ENCODE measurements at regions of chr11 and their contacts with region 1.

Region 1: GRCh38 chr11:69888483-69889076 is 69.4 kb upstream of the FGF3 start:
- DNase-seq: peak; percentile 79 to 88 (median 86)
- ATAC-seq: peak; percentile 90
- H3K4me3 ChIP-seq: no peak overlapping the region
- H3K27ac ChIP-seq: no peak overlapping the region
- H3K4me1 ChIP-seq: peaks cover 0 to 15% of the 10 kb centered on the region in 2 experiments; a peak in 2 of 5 replicates
- H3K27me3 ChIP-seq: peaks cover 15 to 59% of the 10 kb centered on the region in 2 experiments; a peak in 3 of 5 replicates
- CTCF ChIP-seq: peak; percentile 83 to 95 (median 85)
- EP300 ChIP-seq: no peak
- POLR2A ChIP-seq: no peak
- RAD21 ChIP-seq: peak; percentile 48 to 71

Region 2: GRCh38 chr11:69683764-69684333 is 204.7 kb before region 1 on chr11:
- CTCF ChIA-PET with region 1: interaction called, 25 read pairs
- POLR2A ChIA-PET with region 1: no interaction called
- in situ Hi-C with region 1: loop called (anchors 10 kb)
- intact Hi-C with region 1: loop called (anchors 1 kb)
- DNase-seq: peak in 3 of 4 experiments; percentile 38 to 54 (median 44)
- ATAC-seq: peak; percentile 76
- H3K4me3 ChIP-seq: no peak overlapping the region
- H3K27ac ChIP-seq: no peak overlapping the region; the same call in 2 of the 3 replicates
- H3K4me1 ChIP-seq: peaks cover 0 to 13% of the 10 kb centered on the region in 2 experiments; a peak in 3 of 5 replicates
- H3K27me3 ChIP-seq: no peaks in the 10 kb centered on the region
- CTCF ChIP-seq: peak; percentile 56 to 73 (median 61)
- EP300 ChIP-seq: no peak
- POLR2A ChIP-seq: no peak
- RAD21 ChIP-seq: peak; percentile 31 to 79; a peak in 2 of 4 replicates

Region 3: DNA sequence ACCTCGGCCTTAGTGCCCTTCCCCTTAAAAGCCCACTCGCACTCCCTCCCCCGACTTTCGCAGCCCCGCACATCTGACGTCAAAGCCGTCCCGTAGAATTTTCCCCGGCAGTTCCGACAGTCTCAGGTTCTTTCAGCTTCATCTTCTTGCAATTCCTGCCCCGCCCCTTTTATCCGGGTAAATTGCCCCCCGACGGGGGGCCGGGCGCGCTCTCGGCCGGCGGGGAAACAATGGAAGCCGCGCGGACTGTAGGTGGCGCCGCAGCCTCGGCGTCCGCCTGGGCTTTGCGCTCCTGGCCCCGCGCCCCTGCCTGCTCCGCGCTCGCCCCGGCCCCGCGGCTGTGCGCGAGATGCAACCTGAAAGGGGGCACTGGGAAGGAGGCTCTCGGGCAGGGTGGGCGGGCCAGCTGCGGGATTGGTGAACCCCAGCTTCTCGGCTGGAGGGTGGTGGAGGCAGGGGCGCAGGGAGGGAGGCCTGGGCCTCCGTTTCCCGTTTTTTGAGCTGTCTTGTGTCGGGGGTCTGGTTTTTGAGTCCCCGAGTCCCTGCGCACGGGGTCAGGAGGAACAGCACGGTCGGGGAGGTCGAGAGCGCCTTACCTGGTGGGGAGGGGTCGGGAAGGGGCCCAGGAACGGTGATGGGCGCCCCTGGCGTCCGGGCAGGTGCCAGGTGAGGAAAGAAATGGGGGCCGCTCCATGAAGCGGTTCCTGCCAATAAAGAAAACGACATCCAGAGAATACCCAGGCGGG is 183.9 kb before region 1 on chr11:
- CTCF ChIA-PET with region 1: interaction called, 6 read pairs
- POLR2A ChIA-PET with region 1: no interaction called
- in situ Hi-C with region 1: no loop called
- intact Hi-C with region 1: loop called (anchors 1 kb)
- DNase-seq: peak; percentile 30 to 76 (median 66)
- ATAC-seq: peak; percentile 84
- H3K4me3 ChIP-seq: no peak overlapping the region
- H3K27ac ChIP-seq: no peak overlapping the region
- H3K4me1 ChIP-seq: peaks cover 2 to 32% of the 10 kb centered on the region in 2 experiments; a peak in 3 of 5 replicates
- H3K27me3 ChIP-seq: peaks cover 7 to 46% of the 10 kb centered on the region in 2 experiments; a peak in 3 of 5 replicates
- CTCF ChIP-seq: peak; percentile 58 to 71 (median 59)
- EP300 ChIP-seq: no peak
- POLR2A ChIP-seq: no peak
- RAD21 ChIP-seq: peak in 1 of 2 experiments; percentile 67; a peak in 3 of 4 replicates

Region 4: GRCh38 chr11:70020336-70021214 is 132.0 kb after region 1 on chr11:
- CTCF ChIA-PET with region 1: no interaction called
- POLR2A ChIA-PET with region 1: no interaction called
- in situ Hi-C with region 1: no loop called
- intact Hi-C with region 1: no loop called
- DNase-seq: peak; percentile 18 to 33 (median 28)
- ATAC-seq: no peak
- H3K4me3 ChIP-seq: no peak overlapping the region
- H3K27ac ChIP-seq: no peak overlapping the region
- H3K4me1 ChIP-seq: peaks cover 0 to 5% of the 10 kb centered on the region in 2 experiments; a peak in 3 of 5 replicates
- H3K27me3 ChIP-seq: peaks cover 16 to 76% of the 10 kb centered on the region in 2 experiments
- CTCF ChIP-seq: no peak
- EP300 ChIP-seq: no peak
- POLR2A ChIP-seq: no peak
- RAD21 ChIP-seq: no peak